Caco-2 (cell line): ENCODE measurements at regions of chr16 and their contacts with region 1.

Region 1: DNA sequence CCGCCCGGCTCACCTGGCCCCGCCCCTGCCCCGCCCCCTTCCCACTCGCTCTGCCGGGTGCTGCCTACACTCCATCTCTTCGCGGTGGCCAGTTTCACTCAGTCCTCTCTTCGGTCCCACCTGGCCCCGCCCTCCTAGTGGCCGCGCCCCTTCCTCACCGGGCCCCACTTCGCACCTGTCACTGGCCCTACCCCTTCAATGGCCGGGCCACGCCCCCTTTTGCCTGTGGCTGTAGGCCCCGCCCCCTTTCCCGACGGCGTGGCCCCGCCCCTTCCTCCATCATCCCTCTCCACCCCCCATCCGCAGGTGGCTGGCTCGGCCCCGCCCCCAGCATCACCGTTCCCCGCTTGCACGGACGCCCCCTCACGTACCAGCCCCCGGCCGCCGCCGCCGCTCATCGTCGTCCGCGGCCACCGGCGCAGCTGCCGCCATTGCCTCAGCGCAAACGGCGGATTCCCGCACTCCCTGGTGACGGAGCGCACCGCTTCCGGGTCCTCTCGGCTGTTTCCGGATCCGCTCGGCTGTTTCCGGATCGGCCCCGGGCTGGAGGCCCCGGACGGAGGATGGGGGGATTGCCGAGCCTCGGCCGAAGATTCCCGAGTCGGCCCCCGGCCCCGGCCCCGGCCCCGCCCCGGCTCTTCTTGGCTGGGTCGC is at the start of gene RABEP2:
- DNase-seq: peak; percentile 99
- H3K4me3 ChIP-seq: peak within 1 kb of the TSS; percentile 84
- H3K4me3 Mint-ChIP-seq: peak within 1 kb of the TSS; percentile 95
- H3K27ac Mint-ChIP-seq: peak within 1 kb of the TSS; percentile 94
- H3K4me1 ChIP-seq: peaks cover 11% of the 10 kb centered on the region
- H3K4me1 Mint-ChIP-seq: peaks cover 14% of the 10 kb centered on the region
- H3K27me3 ChIP-seq: no peaks in the 10 kb centered on the region
- H3K27me3 Mint-ChIP-seq: no peaks in the 10 kb centered on the region
- CTCF ChIP-seq: no peak
- total RNA-seq, gene RABEP2: 22.9 and 24.2 TPM in 2 replicates

Region 2: GRCh38 chr16:28879841-28880588 is 44.8 kb before region 1 on chr16:
- CTCF ChIA-PET with region 1: no interaction called
- POLR2A ChIA-PET with region 1: no interaction called
- intact Hi-C with region 1: no loop called
- DNase-seq: peak; percentile 86 to 90
- H3K4me3 ChIP-seq: peak overlapping the region; percentile 63
- H3K4me3 Mint-ChIP-seq: peak overlapping the region; percentile 89
- H3K27ac Mint-ChIP-seq: peak overlapping the region; percentile 80
- H3K4me1 ChIP-seq: peaks cover 5% of the 10 kb centered on the region; the same call in 1 of the 2 replicates
- H3K4me1 Mint-ChIP-seq: no peaks in the 10 kb centered on the region
- H3K27me3 ChIP-seq: no peaks in the 10 kb centered on the region
- H3K27me3 Mint-ChIP-seq: no peaks in the 10 kb centered on the region
- CTCF ChIP-seq: no peak

Region 3: GRCh38 chr16:28950648-28951409 is 26.0 kb after region 1 on chr16 and contains the start of gene NFATC2IP:
- CTCF ChIA-PET with region 1: no interaction called
- POLR2A ChIA-PET with region 1: no interaction called
- intact Hi-C with region 1: loop called (anchors 1 kb)
- DNase-seq: peak; percentile 98 to 100
- H3K4me3 ChIP-seq: peak within 1 kb of the TSS; percentile 91
- H3K4me3 Mint-ChIP-seq: peak within 1 kb of the TSS; percentile 88
- H3K27ac Mint-ChIP-seq: peak within 1 kb of the TSS; percentile 92
- H3K4me1 ChIP-seq: no peaks in the 10 kb centered on the region
- H3K4me1 Mint-ChIP-seq: peaks cover 9% of the 10 kb centered on the region
- H3K27me3 ChIP-seq: no peaks in the 10 kb centered on the region
- H3K27me3 Mint-ChIP-seq: no peaks in the 10 kb centered on the region
- CTCF ChIP-seq: no peak
- total RNA-seq, gene NFATC2IP: 50.6 and 58.2 TPM in 2 replicates

Region 4: GRCh38 chr16:29012913-29013553 is 88.2 kb after region 1 on chr16:
- CTCF ChIA-PET with region 1: no interaction called
- POLR2A ChIA-PET with region 1: no interaction called
- intact Hi-C with region 1: no loop called
- DNase-seq: no peak
- H3K4me3 ChIP-seq: no peak overlapping the region
- H3K4me3 Mint-ChIP-seq: no peak overlapping the region
- H3K27ac Mint-ChIP-seq: no peak overlapping the region
- H3K4me1 ChIP-seq: no peaks in the 10 kb centered on the region
- H3K4me1 Mint-ChIP-seq: no peaks in the 10 kb centered on the region
- H3K27me3 ChIP-seq: no peaks in the 10 kb centered on the region
- H3K27me3 Mint-ChIP-seq: peaks cover 4% of the 10 kb centered on the region
- CTCF ChIP-seq: no peak